ENCODE measurements at regions of chr2 and their contacts with region 1.

Region 1: DNA sequence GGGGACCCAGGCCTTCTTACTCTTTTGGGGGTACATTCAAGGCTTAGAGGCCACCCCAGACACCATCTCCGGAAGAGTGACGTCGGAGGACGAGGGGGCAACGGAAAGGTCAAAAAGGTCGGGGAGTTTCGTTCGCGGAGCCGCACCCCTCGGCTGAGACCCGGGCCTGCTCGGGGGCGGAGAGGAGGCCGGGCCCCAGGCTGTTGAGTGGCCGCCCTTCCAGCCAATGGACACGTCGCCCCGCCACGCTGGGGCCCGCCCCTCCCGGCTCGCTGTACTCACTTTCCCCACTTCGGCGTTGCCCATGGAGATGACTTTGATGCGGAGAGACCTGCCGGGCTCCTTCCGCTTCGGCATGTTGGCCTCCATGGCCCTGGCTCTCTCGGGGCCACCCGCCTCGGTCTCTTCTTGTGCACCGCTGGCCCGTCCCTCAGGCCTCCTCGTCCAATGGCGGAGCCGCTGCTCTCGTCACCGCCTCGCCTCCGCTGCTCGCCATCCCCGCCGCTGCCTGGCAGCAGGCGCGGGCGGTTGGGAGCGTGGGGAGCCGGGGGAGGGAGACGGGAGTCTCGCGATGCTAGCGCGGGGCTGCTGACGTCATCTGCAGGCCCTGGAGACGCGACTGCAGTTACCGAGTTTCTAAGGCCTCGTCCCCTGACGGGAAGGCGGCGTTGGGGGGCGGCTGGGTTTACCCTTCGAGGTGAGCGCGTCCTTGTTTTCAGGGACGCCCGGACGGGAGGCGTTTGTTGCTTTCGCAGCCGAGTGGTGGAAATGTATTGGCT is at the start of gene DNAJC27:
- DNase-seq: peak; percentile 98
- CTCF ChIP-seq: no peak

Region 2: GRCh38 chr2:24409700-24410556 is 561.8 kb before region 1 on chr2:
- CTCF ChIA-PET with region 1: interaction called, 10 read pairs
- POLR2A ChIA-PET with region 1: no interaction called
- DNase-seq: peak; percentile 77
- CTCF ChIP-seq: peak; percentile 80

Region 3: DNA sequence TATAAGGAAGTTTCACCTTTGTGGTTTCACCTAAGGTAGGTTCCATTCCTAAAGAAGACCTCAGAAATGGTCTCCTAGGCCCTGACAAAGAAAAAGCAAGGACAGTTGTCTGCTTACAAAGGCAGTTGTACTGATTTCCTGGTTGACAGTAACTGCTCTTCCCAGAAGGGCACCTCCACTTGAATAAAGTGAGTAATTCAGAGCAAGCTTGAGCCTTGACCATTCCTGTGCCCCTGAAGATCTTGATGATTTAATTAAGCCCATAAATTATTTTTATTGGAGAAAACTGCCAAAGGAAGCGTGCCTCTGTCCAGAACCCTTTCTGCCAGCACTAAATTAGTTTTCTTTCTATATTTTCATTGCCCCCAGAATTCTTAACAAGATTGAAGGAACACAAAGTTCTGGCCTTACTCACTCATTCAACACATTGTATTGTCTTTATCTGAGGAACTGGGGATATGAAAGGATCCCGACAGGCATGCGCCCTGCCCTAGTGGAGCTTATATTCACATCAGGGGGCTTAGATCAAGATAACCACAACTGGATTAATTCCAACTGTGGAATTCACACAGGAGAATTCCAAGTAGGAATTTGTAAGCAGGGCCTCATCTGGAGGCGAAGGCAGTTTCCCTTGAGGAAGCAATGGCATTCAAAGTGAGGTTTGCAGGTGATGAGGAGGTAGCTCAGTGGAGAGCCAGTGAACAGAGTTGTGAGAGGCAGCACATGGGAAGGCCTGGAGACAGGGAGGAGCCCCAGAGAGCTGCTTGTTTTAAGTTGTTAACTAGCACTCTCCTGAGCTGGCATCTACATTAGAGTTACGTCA is 199.8 kb before region 1 on chr2:
- CTCF ChIA-PET with region 1: no interaction called
- POLR2A ChIA-PET with region 1: no interaction called
- DNase-seq: no peak
- CTCF ChIP-seq: no peak

Region 4: GRCh38 chr2:25009954-25010353 is 38.2 kb after region 1 on chr2:
- CTCF ChIA-PET with region 1: interaction called, 15 read pairs
- POLR2A ChIA-PET with region 1: no interaction called
- DNase-seq: no peak
- CTCF ChIP-seq: no peak

Region 5: DNA sequence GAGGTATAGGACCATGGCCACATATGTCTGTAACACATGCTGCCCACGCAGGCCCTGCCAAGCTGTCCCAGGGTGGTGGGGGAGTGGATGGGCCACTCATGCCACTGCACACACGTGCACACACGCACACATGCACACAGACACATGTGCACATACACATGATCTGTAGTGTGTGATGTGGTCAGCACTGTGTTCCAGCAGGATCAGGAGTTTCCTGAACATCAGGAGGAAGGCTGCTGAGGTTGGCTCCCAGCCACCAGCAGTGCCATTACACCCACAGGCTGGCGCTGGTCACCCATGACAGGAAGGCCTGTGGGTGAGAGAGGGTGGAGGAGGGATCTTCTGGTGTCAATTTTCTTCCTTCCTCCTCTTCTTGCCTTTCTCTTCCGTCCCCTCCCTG is 152.0 kb after region 1 on chr2:
- CTCF ChIA-PET with region 1: interaction called, 129 read pairs
- POLR2A ChIA-PET with region 1: no interaction called
- DNase-seq: no peak
- CTCF ChIP-seq: no peak

Region 6: DNA sequence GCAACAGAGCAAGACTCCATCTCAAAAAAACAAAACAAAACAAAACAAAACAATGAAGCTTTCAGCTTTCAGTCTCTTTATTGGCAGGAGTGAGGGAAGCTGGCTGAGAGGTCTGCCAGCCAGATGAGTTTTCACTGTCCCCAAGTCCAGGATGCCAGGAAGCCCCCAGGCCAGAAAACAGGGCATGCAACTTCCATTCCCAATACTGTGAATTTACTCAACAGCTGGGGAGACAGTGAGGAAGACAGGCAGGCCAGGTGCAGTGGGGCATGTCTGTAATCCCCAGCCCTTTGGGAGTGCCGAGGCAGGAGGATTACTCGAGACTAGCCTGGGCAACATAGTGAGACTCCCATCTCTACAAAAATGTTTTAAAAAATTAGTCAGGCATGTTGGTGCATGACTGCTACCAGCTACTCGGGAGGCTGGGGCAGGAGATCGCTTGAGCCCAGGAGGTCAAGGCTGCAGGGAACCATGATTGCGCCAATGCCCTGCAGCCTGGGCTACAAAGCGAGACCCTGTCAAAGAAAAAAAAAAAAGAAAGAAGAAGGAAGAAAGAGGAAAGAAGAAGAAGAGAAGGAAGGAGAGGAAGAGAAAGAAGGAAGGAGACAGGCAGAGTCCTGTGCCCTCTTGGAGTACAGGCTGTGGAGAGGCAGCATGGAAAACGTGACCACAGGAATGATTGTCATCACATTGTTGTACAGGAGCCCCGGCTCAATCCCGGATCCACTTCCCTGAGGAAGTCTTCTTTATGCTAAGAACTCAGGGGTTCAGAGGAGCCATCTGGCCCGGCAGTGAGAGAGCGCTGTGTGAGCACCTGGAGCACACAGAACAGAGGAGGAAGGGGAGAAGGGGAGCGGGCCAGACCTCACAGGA is 225.8 kb after region 1 on chr2:
- CTCF ChIA-PET with region 1: interaction called, 35 read pairs
- POLR2A ChIA-PET with region 1: no interaction called
- DNase-seq: no peak
- CTCF ChIP-seq: no peak